ENCODE measurements at regions of chr7 and their contacts with region 1.

Region 1: DNA sequence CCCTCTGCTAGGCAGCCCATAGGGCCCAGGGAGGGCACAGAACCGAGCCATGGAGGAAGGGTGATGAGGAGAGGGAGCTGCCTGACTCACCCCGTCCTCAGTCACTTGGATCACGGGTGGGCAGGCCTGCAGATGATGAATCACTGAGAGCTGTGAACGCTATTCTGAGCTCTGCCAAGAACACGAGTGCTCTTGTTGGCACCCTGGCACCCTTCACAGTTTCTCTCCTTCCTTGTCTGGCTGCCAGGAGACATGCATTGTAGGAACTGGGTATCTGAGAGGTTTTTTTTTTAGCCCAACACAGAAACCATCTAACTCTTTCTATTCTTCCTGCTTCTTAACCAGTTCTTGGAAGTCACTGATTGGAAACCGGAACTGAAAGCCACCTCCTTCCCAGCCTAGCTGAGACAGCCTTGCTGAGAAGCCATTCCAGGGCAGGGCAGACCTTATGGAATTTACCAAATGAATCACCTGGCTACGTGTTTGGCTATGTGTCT is 82.1 kb downstream of the SLC37A3 start:
- DNase-seq: peak; percentile 93 to 98 (median 97)
- H3K4me3 ChIP-seq: peak overlapping the region; percentile 19 to 65 (median 32)
- H3K4me3 Mint-ChIP-seq: peak overlapping the region; percentile 56 to 88
- H3K27ac ChIP-seq: peak overlapping the region; percentile 92 to 95
- H3K27ac Mint-ChIP-seq: peak overlapping the region; percentile 90 to 97 (median 96)
- H3K4me1 ChIP-seq: peaks cover 85 to 95% of the 10 kb centered on the region in 2 donors
- H3K4me1 Mint-ChIP-seq: peaks cover 88% of the 10 kb centered on the region
- H3K27me3 ChIP-seq: no peaks in the 10 kb centered on the region
- H3K27me3 Mint-ChIP-seq: peaks cover 0 to 6% (median 0%) of the 10 kb centered on the region in 3 donors
- CTCF ChIP-seq: no peak

Region 2: GRCh38 chr7:140230861-140231770 is 85.1 kb before region 1 on chr7:
- intact Hi-C with region 1: loop called (anchors 5 kb)
- DNase-seq: peak; percentile 47 to 80 (median 54)
- H3K4me3 ChIP-seq: peak overlapping the region; percentile 49 to 82 (median 68)
- H3K4me3 Mint-ChIP-seq: peak overlapping the region; percentile 95 to 98
- H3K27ac ChIP-seq: peak overlapping the region; percentile 91 to 92
- H3K27ac Mint-ChIP-seq: peak overlapping the region; percentile 93 to 99 (median 96)
- H3K4me1 ChIP-seq: peaks cover 49 to 67% of the 10 kb centered on the region in 2 donors
- H3K4me1 Mint-ChIP-seq: peaks cover 42% of the 10 kb centered on the region
- H3K27me3 ChIP-seq: peaks cover 0 to 14% of the 10 kb centered on the region in 2 donors
- H3K27me3 Mint-ChIP-seq: peaks cover 5 to 21% (median 18%) of the 10 kb centered on the region in 3 donors
- CTCF ChIP-seq: no peak

Region 3: GRCh38 chr7:140564643-140565042 is 248.4 kb after region 1 on chr7:
- intact Hi-C with region 1: no loop called
- DNase-seq: no peak
- H3K4me3 ChIP-seq: no peak overlapping the region
- H3K4me3 Mint-ChIP-seq: no peak overlapping the region
- H3K27ac ChIP-seq: no peak overlapping the region
- H3K27ac Mint-ChIP-seq: no peak overlapping the region
- H3K4me1 ChIP-seq: no peaks in the 10 kb centered on the region
- H3K4me1 Mint-ChIP-seq: no peaks in the 10 kb centered on the region
- H3K27me3 ChIP-seq: no peaks in the 10 kb centered on the region
- H3K27me3 Mint-ChIP-seq: peaks cover 0 to 17% (median 9%) of the 10 kb centered on the region in 3 donors
- CTCF ChIP-seq: no peak